Naive thymus-derived CD4-positive, alpha-beta T cell (primary cell): ENCODE measurements at regions of chr1 and their contacts with region 1.

Region 1: GRCh38 chr1:179365320-179366092 is at the start of gene AXDND1:
- DNase-seq: peak; percentile 80 to 96 (median 94)
- ATAC-seq: peak; percentile 95
- H3K4me3 ChIP-seq: peak within 1 kb of the TSS; percentile 91
- H3K4me3 Mint-ChIP-seq: peak within 1 kb of the TSS; percentile 82 to 99 (median 94)
- H3K27ac ChIP-seq: peak within 1 kb of the TSS; percentile 91
- H3K27ac Mint-ChIP-seq: peak within 1 kb of the TSS; percentile 99 to 100 (median 100)
- H3K4me1 ChIP-seq: peaks cover 5 to 8% of the 10 kb centered on the region in 2 donors
- H3K4me1 Mint-ChIP-seq: peaks cover 4 to 21% (median 14%) of the 10 kb centered on the region in 7 donors
- H3K27me3 ChIP-seq: no peaks in the 10 kb centered on the region
- H3K27me3 Mint-ChIP-seq: peaks cover 0 to 10% (median 0%) of the 10 kb centered on the region in 5 donors
- total RNA-seq, gene AXDND1: 0.98 to 2.3 (median 1.3) TPM in 3 of 5 experiments, not detected in the others

Region 2: GRCh38 chr1:178532392-178532791 is 833.1 kb before region 1 on chr1:
- CTCF ChIA-PET with region 1: no interaction called
- POLR2A ChIA-PET with region 1: no interaction called
- intact Hi-C with region 1: loop called in 1 of 2 experiments (anchors 1 kb)
- DNase-seq: peak; percentile 42 to 74 (median 63)
- ATAC-seq: peak; percentile 92
- H3K4me3 ChIP-seq: no peak overlapping the region
- H3K4me3 Mint-ChIP-seq: peak overlapping the region in 1 of 10 donors; percentile 27
- H3K27ac ChIP-seq: no peak overlapping the region
- H3K27ac Mint-ChIP-seq: no peak overlapping the region
- H3K4me1 ChIP-seq: peaks cover 0 to 6% of the 10 kb centered on the region in 2 donors
- H3K4me1 Mint-ChIP-seq: peaks cover 0 to 4% (median 4%) of the 10 kb centered on the region in 7 donors
- H3K27me3 ChIP-seq: no peaks in the 10 kb centered on the region
- H3K27me3 Mint-ChIP-seq: peaks cover 0 to 2% (median 0%) of the 10 kb centered on the region in 5 donors

Region 3: DNA sequence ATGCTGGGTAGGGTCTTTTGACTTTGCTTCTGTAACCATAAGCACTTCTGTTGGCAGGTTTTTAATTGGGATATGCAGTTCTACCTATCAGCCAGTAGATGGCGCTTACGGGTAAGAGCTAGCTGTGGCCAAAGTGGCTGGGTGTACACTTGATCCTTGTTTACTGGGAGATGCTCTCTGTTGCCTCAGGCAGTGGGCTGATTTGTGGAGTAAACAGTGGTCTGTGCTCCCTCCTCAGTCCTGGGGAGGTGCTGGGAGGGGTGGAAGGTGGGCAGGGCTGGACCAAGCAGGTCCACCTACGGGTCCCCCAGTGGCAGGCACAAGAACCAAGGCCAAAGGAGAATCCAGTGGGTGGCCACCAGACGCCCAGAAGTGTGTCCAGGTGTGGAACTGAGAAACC is 597.1 kb before region 1 on chr1:
- CTCF ChIA-PET with region 1: no interaction called
- POLR2A ChIA-PET with region 1: no interaction called
- intact Hi-C with region 1: loop called in 1 of 2 experiments (anchors 1 kb)
- DNase-seq: peak in 5 of 9 donors; percentile 3 to 26 (median 15)
- ATAC-seq: peak; percentile 61
- H3K4me3 ChIP-seq: no peak overlapping the region
- H3K4me3 Mint-ChIP-seq: no peak overlapping the region
- H3K27ac ChIP-seq: no peak overlapping the region
- H3K27ac Mint-ChIP-seq: peak overlapping the region in 1 of 9 donors; percentile 16
- H3K4me1 ChIP-seq: no peaks in the 10 kb centered on the region
- H3K4me1 Mint-ChIP-seq: peaks cover 0 to 16% (median 8%) of the 10 kb centered on the region in 7 donors
- H3K27me3 ChIP-seq: no peaks in the 10 kb centered on the region
- H3K27me3 Mint-ChIP-seq: no peaks in the 10 kb centered on the region

Region 4: DNA sequence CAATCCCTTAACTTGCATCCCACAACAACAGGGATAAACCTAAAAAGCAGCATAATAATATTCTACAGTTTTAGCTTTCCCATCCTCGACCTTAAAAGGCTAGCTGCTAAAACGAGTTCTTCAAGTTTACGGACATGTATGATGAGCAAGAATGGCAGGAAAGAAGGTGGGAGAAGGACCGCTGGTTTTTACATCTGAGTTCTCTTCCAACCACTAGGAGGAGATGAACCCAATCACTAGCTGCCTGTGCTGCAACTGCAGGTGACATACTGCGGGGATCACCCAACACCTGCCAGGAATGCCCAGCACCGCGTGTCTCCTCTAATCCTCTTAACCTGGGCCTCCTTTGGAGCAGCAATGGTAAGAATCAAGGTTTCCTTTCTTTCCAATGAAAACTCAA is 260.2 kb before region 1 on chr1:
- CTCF ChIA-PET with region 1: no interaction called
- POLR2A ChIA-PET with region 1: interaction called, 3 read pairs
- intact Hi-C with region 1: loop called in 1 of 2 experiments (anchors 1 kb)
- DNase-seq: peak in 1 of 9 donors; percentile 23
- ATAC-seq: peak; percentile 31
- H3K4me3 ChIP-seq: no peak overlapping the region
- H3K4me3 Mint-ChIP-seq: no peak overlapping the region
- H3K27ac ChIP-seq: no peak overlapping the region
- H3K27ac Mint-ChIP-seq: peak overlapping the region in 1 of 9 donors; percentile 28
- H3K4me1 ChIP-seq: no peaks in the 10 kb centered on the region
- H3K4me1 Mint-ChIP-seq: no peaks in the 10 kb centered on the region
- H3K27me3 ChIP-seq: no peaks in the 10 kb centered on the region
- H3K27me3 Mint-ChIP-seq: no peaks in the 10 kb centered on the region

Region 5: GRCh38 chr1:179229214-179230140 is 136.0 kb before region 1 on chr1 and contains the start of gene ABL2:
- CTCF ChIA-PET with region 1: no interaction called
- POLR2A ChIA-PET with region 1: interaction called, 3 read pairs
- intact Hi-C with region 1: loop called (anchors 1 to 2 kb)
- DNase-seq: peak; percentile 20 to 73 (median 41)
- ATAC-seq: peak; percentile 77
- H3K4me3 ChIP-seq: peak within 1 kb of the TSS; percentile 66
- H3K4me3 Mint-ChIP-seq: peak within 1 kb of the TSS; percentile 85 to 97 (median 92)
- H3K27ac ChIP-seq: peak within 1 kb of the TSS; percentile 81
- H3K27ac Mint-ChIP-seq: peak within 1 kb of the TSS; percentile 81 to 95 (median 89)
- H3K4me1 ChIP-seq: peaks cover 0 to 14% of the 10 kb centered on the region in 2 donors
- H3K4me1 Mint-ChIP-seq: peaks cover 20 to 43% (median 39%) of the 10 kb centered on the region in 7 donors
- H3K27me3 ChIP-seq: no peaks in the 10 kb centered on the region
- H3K27me3 Mint-ChIP-seq: peaks cover 0 to 5% (median 0%) of the 10 kb centered on the region in 5 donors
- total RNA-seq, gene ABL2: 10.3 to 20.1 (median 18.6) TPM

Region 6: GRCh38 chr1:179298952-179299351 is 66.6 kb before region 1 on chr1:
- CTCF ChIA-PET with region 1: interaction called, 11 read pairs
- POLR2A ChIA-PET with region 1: interaction called, 18 read pairs
- intact Hi-C with region 1: loop called in 1 of 2 experiments (anchors 1 kb)
- DNase-seq: peak in 8 of 9 donors; percentile 42 to 80 (median 72)
- ATAC-seq: peak; percentile 89
- H3K4me3 ChIP-seq: no peak overlapping the region
- H3K4me3 Mint-ChIP-seq: peak overlapping the region; percentile 16 to 94 (median 58)
- H3K27ac ChIP-seq: peak overlapping the region; percentile 54
- H3K27ac Mint-ChIP-seq: peak overlapping the region; percentile 50 to 81 (median 64)
- H3K4me1 ChIP-seq: peaks cover 41 to 61% of the 10 kb centered on the region in 2 donors
- H3K4me1 Mint-ChIP-seq: peaks cover 57 to 90% (median 81%) of the 10 kb centered on the region in 7 donors
- H3K27me3 ChIP-seq: no peaks in the 10 kb centered on the region
- H3K27me3 Mint-ChIP-seq: no peaks in the 10 kb centered on the region

Region 7: GRCh38 chr1:179954493-179955297 is 589.2 kb after region 1 on chr1 and contains the start of gene CEP350:
- CTCF ChIA-PET with region 1: no interaction called
- POLR2A ChIA-PET with region 1: no interaction called
- intact Hi-C with region 1: loop called in 1 of 2 experiments (anchors 1 kb)
- DNase-seq: peak; percentile 93 to 99 (median 98)
- ATAC-seq: peak; percentile 92
- H3K4me3 ChIP-seq: peak within 1 kb of the TSS; percentile 67
- H3K4me3 Mint-ChIP-seq: peak within 1 kb of the TSS; percentile 81 to 97 (median 93)
- H3K27ac ChIP-seq: peak within 1 kb of the TSS; percentile 95
- H3K27ac Mint-ChIP-seq: peak within 1 kb of the TSS; percentile 91 to 99 (median 97)
- H3K4me1 ChIP-seq: peaks cover 32 to 42% of the 10 kb centered on the region in 2 donors
- H3K4me1 Mint-ChIP-seq: peaks cover 34 to 72% (median 62%) of the 10 kb centered on the region in 7 donors
- H3K27me3 ChIP-seq: no peaks in the 10 kb centered on the region
- H3K27me3 Mint-ChIP-seq: no peaks in the 10 kb centered on the region
- total RNA-seq, gene CEP350: 56.1 to 90.1 (median 64.4) TPM